ENCODE measurements at regions of chr15 and their contacts with region 1.

Region 1: GRCh38 chr15:96330450-96331145 is at the start of gene NR2F2:
- DNase-seq: peak in 1 of 2 donors; percentile 98
- H3K4me3 ChIP-seq: peak within 1 kb of the TSS; percentile 67 to 85
- H3K27ac ChIP-seq: peak within 1 kb of the TSS; percentile 99
- H3K4me1 ChIP-seq: peaks cover 12% of the 10 kb centered on the region
- H3K27me3 ChIP-seq: no peaks in the 10 kb centered on the region
- CTCF ChIP-seq: no peak
- POLR2A ChIP-seq: peak in 1 of 2 donors; percentile 90
- total RNA-seq, gene NR2F2: 39.8 TPM

Region 2: DNA sequence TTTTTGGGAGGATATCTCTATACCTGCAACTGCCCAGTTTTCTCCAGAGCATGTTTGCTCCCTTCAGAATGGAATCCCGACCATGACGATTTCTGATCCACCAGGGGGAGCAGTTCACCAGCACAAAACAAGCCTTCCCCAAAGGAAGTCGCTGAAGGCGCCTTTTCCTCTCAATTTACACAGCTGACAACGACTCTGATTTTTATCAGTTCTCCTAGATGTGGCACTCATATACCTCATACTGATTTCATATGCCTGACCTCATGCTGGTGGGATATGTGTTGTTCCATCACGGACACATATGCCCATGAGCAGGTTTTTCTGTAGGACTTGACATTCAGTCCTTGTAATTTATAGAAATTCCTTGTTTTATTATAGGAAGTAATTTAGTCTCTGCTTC is 1071.1 kb before region 1 on chr15:
- intact Hi-C with region 1: loop called (anchors 5 kb)
- DNase-seq: no peak
- H3K4me3 ChIP-seq: no peak overlapping the region
- H3K27ac ChIP-seq: peak overlapping the region; percentile 12
- H3K4me1 ChIP-seq: peaks cover 27% of the 10 kb centered on the region
- H3K27me3 ChIP-seq: no peaks in the 10 kb centered on the region
- CTCF ChIP-seq: peak; percentile 81 to 87 (median 82)
- POLR2A ChIP-seq: no peak

Region 3: DNA sequence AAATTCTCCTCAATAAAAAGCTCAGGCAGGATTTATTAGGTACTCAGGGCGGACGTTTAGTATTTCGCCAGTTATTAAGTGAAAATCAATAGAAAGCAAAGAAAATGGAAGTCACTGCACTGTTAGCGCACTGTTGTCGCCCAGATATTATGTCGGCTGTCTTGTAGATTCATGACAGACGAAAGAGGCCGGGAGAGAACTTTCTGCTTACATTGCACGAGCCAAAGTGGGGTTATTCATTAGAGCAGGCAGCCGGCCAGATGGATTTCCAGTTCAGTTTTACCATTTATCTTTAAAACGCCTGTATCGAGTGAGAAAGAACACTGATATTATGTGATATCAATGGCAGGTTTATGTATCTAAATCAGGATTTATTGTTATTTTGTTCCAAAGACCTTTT is 866.1 kb before region 1 on chr15:
- intact Hi-C with region 1: loop called (anchors 10 kb)
- DNase-seq: no peak
- H3K4me3 ChIP-seq: peak overlapping the region; percentile 14 to 35
- H3K27ac ChIP-seq: peak overlapping the region; percentile 21
- H3K4me1 ChIP-seq: peaks cover 7% of the 10 kb centered on the region
- H3K27me3 ChIP-seq: no peaks in the 10 kb centered on the region
- CTCF ChIP-seq: no peak
- POLR2A ChIP-seq: no peak

Region 4: DNA sequence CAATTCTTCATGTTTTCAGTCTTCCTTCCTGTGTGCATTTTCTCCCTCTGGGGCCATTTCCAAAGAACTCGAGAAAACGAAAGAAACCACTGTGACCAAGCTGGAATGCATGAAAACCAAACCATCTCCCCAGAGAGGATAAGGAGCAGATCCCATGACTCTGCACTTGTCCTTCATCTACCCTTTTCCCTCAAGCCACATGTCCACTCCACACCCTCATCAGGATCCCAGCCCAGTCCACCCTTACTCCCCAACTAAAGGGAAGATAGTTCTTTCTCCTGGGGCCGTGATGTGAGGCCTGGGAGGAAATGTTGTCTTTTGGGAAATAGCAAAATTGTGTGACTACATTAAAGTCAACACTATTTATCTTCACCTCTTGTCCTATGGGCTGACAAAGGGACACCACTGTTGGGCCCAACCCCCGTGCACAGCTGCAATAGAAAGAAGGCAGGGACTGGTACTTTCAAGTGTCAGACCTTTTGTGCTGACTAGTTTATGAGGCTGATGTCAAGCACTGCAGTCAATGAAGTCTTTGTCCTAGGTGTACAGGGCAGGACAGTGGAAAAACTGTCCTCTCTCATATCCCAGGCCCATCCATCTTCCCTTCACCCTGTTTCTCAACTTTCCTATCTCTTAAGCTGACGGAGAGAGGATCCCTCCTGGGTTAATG is 487.2 kb before region 1 on chr15:
- intact Hi-C with region 1: loop called (anchors 10 kb)
- DNase-seq: no peak
- H3K4me3 ChIP-seq: no peak overlapping the region
- H3K27ac ChIP-seq: peak overlapping the region; percentile 31
- H3K4me1 ChIP-seq: peaks cover 18% of the 10 kb centered on the region
- H3K27me3 ChIP-seq: no peaks in the 10 kb centered on the region
- CTCF ChIP-seq: no peak
- POLR2A ChIP-seq: no peak

Region 5: GRCh38 chr15:96431787-96432186 is 101.2 kb after region 1 on chr15:
- intact Hi-C with region 1: no loop called
- DNase-seq: no peak
- H3K4me3 ChIP-seq: no peak overlapping the region
- H3K27ac ChIP-seq: no peak overlapping the region
- H3K4me1 ChIP-seq: peaks cover 7% of the 10 kb centered on the region
- H3K27me3 ChIP-seq: no peaks in the 10 kb centered on the region
- CTCF ChIP-seq: no peak
- POLR2A ChIP-seq: no peak

Region 6: GRCh38 chr15:96893159-96893906 is 562.7 kb after region 1 on chr15:
- intact Hi-C with region 1: loop called (anchors 5 kb)
- DNase-seq: no peak
- H3K4me3 ChIP-seq: no peak overlapping the region
- H3K27ac ChIP-seq: peak overlapping the region; percentile 47
- H3K4me1 ChIP-seq: no peaks in the 10 kb centered on the region
- H3K27me3 ChIP-seq: no peaks in the 10 kb centered on the region
- CTCF ChIP-seq: peak; percentile 3 to 48 (median 27)
- POLR2A ChIP-seq: no peak